ENCODE measurements at regions of chr19 and their contacts with region 1.

Region 1: GRCh38 chr19:2236314-2237050 is at the starts of genes PLEKHJ1 and SF3A2:
- DNase-seq: peak; percentile 97 to 98 (median 97)
- ATAC-seq: peak; percentile 89 to 94 (median 89)
- H3K4me3 ChIP-seq: peak within 1 kb of the TSS; percentile 77 to 99 (median 97)
- H3K27ac ChIP-seq: peak within 1 kb of the TSS; percentile 93 to 99 (median 99)
- H3K4me1 ChIP-seq: peaks cover 0 to 46% (median 13%) of the 10 kb centered on the region in 4 donors
- H3K27me3 ChIP-seq: no peaks in the 10 kb centered on the region
- CTCF ChIP-seq: peak; percentile 96 to 100 (median 97)
- POLR2A ChIP-seq: peak; percentile 79
- total RNA-seq, gene PLEKHJ1: 24.4 to 49.3 (median 28.6) TPM
- total RNA-seq, gene SF3A2: 14.0 to 22.1 (median 19.1) TPM

Region 2: GRCh38 chr19:2171349-2172145 is 64.9 kb before region 1 on chr19:
- intact Hi-C with region 1: loop called in 1 of 2 experiments (anchors 5 kb)
- DNase-seq: no peak
- ATAC-seq: peak in 1 of 4 donors; percentile 1
- H3K4me3 ChIP-seq: no peak overlapping the region
- H3K27ac ChIP-seq: peak overlapping the region in 2 of 3 donors; percentile 18 to 34
- H3K4me1 ChIP-seq: peaks cover 2 to 72% (median 37%) of the 10 kb centered on the region in 4 donors
- H3K27me3 ChIP-seq: no peaks in the 10 kb centered on the region
- CTCF ChIP-seq: peak in 1 of 4 donors; percentile 9
- POLR2A ChIP-seq: no peak

Region 3: DNA sequence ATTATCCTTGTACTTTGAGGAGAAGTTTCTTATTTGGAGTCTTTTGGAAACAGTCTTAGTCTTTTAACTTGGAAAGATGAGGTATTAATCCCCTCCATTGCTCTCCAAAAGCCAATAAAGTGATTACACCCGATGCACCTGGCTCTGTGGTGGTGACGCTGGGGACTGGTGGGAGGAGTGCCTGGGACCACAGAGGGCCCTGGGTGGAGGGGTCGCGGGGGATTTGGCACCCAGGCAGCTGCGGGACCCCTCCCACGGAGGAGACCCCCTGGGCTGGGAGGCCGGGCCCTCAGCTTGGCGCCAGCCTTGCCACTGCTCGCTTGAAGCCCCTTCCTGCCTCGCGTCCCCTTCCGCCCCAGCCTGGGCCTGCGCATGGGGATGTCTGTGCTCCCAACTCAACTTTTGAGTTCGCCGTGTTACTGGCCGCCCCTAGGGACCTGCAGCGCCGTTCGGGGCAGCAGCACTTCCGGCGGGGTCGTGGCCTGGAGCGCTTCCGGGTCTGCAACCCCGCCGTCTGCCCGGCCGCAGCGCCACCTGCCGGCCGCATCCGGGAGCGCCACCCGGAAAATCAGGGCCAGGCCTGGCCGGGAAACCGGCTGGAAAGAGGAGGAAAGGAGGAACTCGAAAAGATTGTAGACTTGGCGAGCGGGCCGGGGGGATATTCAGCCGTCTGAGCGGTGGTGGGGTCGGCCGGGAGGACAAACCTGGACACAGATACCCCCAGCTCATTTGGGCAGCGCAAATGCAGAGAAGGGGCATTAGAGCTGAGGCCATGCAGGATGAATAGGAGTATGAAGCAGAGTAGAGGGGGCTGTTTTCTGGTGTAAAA is 37.1 kb after region 1 on chr19:
- intact Hi-C with region 1: loop called (anchors 5 kb)
- DNase-seq: peak; percentile 75 to 79 (median 79)
- ATAC-seq: peak; percentile 25 to 42 (median 35)
- H3K4me3 ChIP-seq: peak overlapping the region; percentile 18 to 40 (median 28)
- H3K27ac ChIP-seq: peak overlapping the region; percentile 25 to 43 (median 41)
- H3K4me1 ChIP-seq: peaks cover 0 to 32% (median 8%) of the 10 kb centered on the region in 4 donors
- H3K27me3 ChIP-seq: no peaks in the 10 kb centered on the region
- CTCF ChIP-seq: peak; percentile 92 to 98 (median 96)
- POLR2A ChIP-seq: no peak

Region 4: DNA sequence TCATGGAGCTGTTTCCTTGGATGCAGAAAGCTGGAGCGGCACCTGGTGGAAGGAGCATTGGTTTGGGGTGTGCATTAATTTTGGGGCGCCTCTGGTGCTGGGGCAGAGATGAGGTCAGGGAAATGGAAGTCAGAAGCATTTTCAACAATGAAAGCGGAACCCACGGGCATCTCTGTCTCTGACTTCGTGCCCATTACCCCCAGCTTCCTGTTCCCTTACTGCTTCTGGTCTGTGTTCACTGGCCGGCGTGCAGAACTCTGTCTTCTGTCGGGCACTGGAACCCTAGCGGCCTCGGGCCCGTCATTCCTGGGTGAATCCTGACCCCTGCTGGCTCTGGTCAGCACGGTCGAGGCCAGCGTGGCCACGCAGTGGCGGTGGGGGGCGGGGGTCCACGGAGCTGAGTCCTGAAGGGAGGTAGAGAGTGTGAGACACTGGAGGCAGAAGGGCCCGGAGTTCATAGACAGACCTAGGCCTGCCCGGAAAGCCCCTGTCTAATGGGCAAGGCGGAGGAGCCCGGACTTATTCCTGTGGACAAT is 79.4 kb after region 1 on chr19:
- intact Hi-C with region 1: loop called in 1 of 2 experiments (anchors 10 kb)
- DNase-seq: peak; percentile 77 to 84 (median 79)
- ATAC-seq: peak; percentile 89 to 97 (median 93)
- H3K4me3 ChIP-seq: no peak overlapping the region
- H3K27ac ChIP-seq: no peak overlapping the region
- H3K4me1 ChIP-seq: no peaks in the 10 kb centered on the region
- H3K27me3 ChIP-seq: peaks cover 0 to 7% of the 10 kb centered on the region in 2 donors
- CTCF ChIP-seq: peak; percentile 46 to 86 (median 65)
- POLR2A ChIP-seq: no peak

Region 5: GRCh38 chr19:2507109-2507508 is 270.6 kb after region 1 on chr19:
- intact Hi-C with region 1: no loop called
- DNase-seq: peak; percentile 57 to 80 (median 77)
- ATAC-seq: peak; percentile 96 to 98 (median 97)
- H3K4me3 ChIP-seq: peak overlapping the region in 1 of 3 donors; percentile 24
- H3K27ac ChIP-seq: peak overlapping the region; percentile 21 to 75 (median 34)
- H3K4me1 ChIP-seq: peaks cover 0 to 6% (median 1%) of the 10 kb centered on the region in 4 donors
- H3K27me3 ChIP-seq: no peaks in the 10 kb centered on the region
- CTCF ChIP-seq: no peak
- POLR2A ChIP-seq: peak; percentile 62

Measured in right lobe of liver (tissue), 6 donors.